ENCODE measurements at regions of chr5 and their contacts with region 1.

Region 1: DNA sequence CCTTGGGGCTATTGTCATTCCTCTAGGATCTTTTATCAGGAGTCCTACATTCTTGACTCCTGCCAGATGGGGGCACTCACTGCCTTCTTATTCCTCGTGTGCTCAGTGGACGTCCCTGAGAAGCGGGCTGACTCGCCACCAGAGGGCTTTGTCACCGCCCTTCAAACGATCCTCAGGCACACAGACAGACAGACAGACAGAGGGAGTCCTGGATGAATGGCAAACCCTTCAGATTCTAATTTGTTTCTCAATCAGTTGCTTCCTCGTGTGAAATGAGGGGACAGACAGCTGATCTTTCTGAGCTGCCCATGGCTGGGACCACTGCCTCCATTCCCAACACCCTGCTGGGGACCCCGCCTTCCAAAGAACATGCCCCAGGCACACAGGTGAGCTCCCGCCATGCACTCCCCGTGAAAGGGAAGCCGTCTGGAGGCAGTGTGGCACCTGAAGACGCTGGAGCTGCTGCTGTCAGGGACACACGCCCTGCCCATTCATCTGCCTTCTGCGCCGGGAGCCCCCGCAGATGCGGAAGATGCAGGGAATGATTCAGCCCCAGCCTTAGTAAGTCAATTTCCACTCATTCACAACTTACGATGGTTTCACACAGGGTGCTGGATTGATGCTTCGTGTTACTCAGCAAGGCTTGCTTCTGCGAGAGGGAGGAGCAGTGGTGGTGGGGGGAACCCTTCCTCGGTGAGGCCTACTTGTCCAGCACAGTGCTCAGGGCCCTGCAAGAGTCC is 24.9 kb upstream of the SH3PXD2B start:
- DNase-seq: peak; percentile 86 to 96 (median 91)
- H3K4me3 ChIP-seq: no peak overlapping the region
- H3K27ac ChIP-seq: peak overlapping the region in 1 of 5 donors; percentile 60
- H3K4me1 ChIP-seq: no peaks in the 10 kb centered on the region
- H3K27me3 ChIP-seq: no peaks in the 10 kb centered on the region
- CTCF ChIP-seq: peak; percentile 75 to 99 (median 98)
- POLR2A ChIP-seq: no peak

Region 2: DNA sequence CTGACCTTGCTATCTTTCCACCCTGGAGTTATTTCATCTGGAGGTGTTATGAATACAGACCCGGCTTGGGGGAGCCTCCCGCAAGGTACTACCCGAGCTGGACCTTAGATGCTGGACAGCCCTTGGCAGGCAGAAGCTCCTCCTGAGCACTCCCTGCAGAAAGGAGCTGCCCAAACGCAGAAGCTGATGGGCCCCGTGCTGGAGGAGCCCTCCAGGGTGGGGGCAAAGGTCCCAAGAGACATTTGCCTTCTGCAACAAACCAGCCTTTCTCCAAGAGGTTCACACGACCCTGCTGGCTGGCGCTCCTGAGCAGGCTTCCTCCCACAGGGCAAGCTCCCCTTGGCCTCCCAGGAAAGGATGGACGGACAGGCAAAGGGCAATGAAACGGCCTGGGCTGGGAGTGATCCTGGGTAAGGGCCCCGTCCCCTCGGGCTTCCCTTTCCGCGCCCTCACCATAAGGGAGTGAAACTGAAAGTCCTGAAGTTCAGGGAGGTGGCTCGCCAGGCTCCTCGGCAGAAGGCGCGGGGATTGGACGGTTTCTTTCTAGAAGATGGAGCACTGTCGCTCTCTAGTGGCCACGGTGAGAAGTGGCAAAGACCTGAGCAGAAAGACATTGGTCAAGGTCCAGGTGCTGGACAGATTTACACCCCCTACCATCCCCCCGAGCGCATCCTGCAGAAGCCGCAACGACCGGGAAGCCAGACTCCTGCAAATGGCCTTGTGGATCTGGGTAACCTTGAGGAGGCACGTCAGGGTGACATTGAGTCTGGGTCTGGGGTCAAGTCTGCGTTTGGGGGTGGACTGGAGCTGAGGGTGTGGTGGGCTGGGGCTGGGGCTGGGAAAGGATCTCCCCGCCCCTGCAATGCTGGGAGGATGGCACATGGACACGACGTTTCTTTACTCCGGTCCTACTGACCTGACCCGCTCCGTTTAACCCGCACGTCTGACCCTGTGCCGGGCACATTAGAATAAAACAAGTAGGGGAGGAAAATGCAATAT is 218.2 kb after region 1 on chr5:
- intact Hi-C with region 1: loop called (anchors 1 to 2 kb)
- DNase-seq: peak; percentile 90 to 96 (median 94)
- H3K4me3 ChIP-seq: peak overlapping the region in 3 of 4 donors; percentile 17 to 64 (median 37)
- H3K27ac ChIP-seq: peak overlapping the region in 4 of 5 donors; percentile 13 to 78 (median 56)
- H3K4me1 ChIP-seq: peaks cover 5 to 24% of the 10 kb centered on the region in 2 donors
- H3K27me3 ChIP-seq: no peaks in the 10 kb centered on the region
- CTCF ChIP-seq: peak; percentile 85 to 98 (median 96)
- POLR2A ChIP-seq: peak; percentile 10 to 52

Region 3: GRCh38 chr5:172943283-172943841 is 464.1 kb after region 1 on chr5:
- intact Hi-C with region 1: loop called in 1 of 2 experiments (anchors 10 kb)
- DNase-seq: no peak
- H3K4me3 ChIP-seq: no peak overlapping the region
- H3K27ac ChIP-seq: no peak overlapping the region
- H3K4me1 ChIP-seq: no peaks in the 10 kb centered on the region
- H3K27me3 ChIP-seq: no peaks in the 10 kb centered on the region
- CTCF ChIP-seq: no peak
- POLR2A ChIP-seq: no peak

Region 4: DNA sequence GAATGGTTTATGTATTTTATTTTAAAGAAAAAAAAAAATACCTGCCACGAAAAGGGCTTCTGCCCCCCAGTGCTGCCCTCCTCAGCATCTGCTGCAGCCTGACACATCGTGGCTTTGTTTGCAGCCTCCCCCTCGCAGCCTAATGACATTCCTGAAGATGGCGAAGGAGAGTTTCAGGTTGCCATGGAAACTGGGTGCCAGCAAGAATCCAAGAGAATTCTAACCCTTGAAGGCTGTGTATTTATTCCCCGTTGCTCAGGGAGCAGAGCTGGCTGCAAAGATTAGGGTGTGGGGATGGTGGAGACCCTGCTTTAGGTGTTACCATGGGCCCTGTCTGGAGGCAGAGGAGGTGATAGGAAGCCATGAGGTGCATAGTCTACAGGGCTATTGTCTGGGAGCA is 1692.9 kb after region 1 on chr5:
- intact Hi-C with region 1: no loop called
- DNase-seq: peak in 1 of 7 donors; percentile 13
- H3K4me3 ChIP-seq: no peak overlapping the region
- H3K27ac ChIP-seq: no peak overlapping the region
- H3K4me1 ChIP-seq: no peaks in the 10 kb centered on the region
- H3K27me3 ChIP-seq: no peaks in the 10 kb centered on the region
- CTCF ChIP-seq: no peak
- POLR2A ChIP-seq: no peak